ENCODE measurements at regions of chr14 and their contacts with region 1.

Region 1: GRCh38 chr14:54524410-54524809 is 14.7 kb downstream of the CGRRF1 start:
- DNase-seq: no peak
- ATAC-seq: no peak
- H3K4me3 ChIP-seq: no peak overlapping the region
- H3K4me3 Mint-ChIP-seq: no peak overlapping the region
- H3K27ac ChIP-seq: no peak overlapping the region
- H3K27ac Mint-ChIP-seq: no peak overlapping the region
- H3K4me1 ChIP-seq: no peaks in the 10 kb centered on the region
- H3K4me1 Mint-ChIP-seq: peaks cover 4% of the 10 kb centered on the region
- H3K27me3 ChIP-seq: no peaks in the 10 kb centered on the region
- H3K27me3 Mint-ChIP-seq: no peaks in the 10 kb centered on the region
- CTCF ChIP-seq: no peak

Region 2: GRCh38 chr14:54435500-54435981 is 88.9 kb before region 1 on chr14:
- CTCF ChIA-PET with region 1: no interaction called
- POLR2A ChIA-PET with region 1: no interaction called
- intact Hi-C with region 1: no loop called
- DNase-seq: peak in 1 of 9 experiments; percentile 25
- ATAC-seq: peak; percentile 72
- H3K4me3 ChIP-seq: no peak overlapping the region
- H3K4me3 Mint-ChIP-seq: peak overlapping the region; percentile 16
- H3K27ac ChIP-seq: no peak overlapping the region
- H3K27ac Mint-ChIP-seq: no peak overlapping the region
- H3K4me1 ChIP-seq: peaks cover 12% of the 10 kb centered on the region
- H3K4me1 Mint-ChIP-seq: peaks cover 66% of the 10 kb centered on the region
- H3K27me3 ChIP-seq: no peaks in the 10 kb centered on the region
- H3K27me3 Mint-ChIP-seq: no peaks in the 10 kb centered on the region
- CTCF ChIP-seq: no peak

Region 3: DNA sequence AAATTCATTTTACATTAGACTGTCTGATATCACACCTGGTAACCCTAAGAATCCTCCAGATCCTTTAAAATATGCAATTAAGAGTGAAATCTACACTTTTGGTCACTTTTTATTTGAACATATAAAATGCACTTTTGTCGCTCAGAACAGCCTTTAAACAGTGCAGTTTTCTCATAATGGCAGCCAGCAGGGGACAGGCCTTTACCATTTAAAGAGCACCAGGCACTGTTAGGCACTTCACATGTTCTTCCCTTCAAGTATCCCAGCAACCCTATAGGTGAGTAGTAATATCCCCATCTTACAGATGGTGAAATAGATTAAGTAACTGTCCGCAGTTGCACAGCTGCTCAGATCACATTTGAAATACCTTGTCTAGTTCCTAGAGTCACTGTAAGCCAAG is 31.2 kb after region 1 on chr14:
- CTCF ChIA-PET with region 1: no interaction called
- POLR2A ChIA-PET with region 1: no interaction called
- intact Hi-C with region 1: loop called in 1 of 2 experiments (anchors 1 kb)
- DNase-seq: no peak
- ATAC-seq: no peak
- H3K4me3 ChIP-seq: no peak overlapping the region
- H3K4me3 Mint-ChIP-seq: no peak overlapping the region
- H3K27ac ChIP-seq: no peak overlapping the region
- H3K27ac Mint-ChIP-seq: no peak overlapping the region
- H3K4me1 ChIP-seq: no peaks in the 10 kb centered on the region
- H3K4me1 Mint-ChIP-seq: no peaks in the 10 kb centered on the region
- H3K27me3 ChIP-seq: no peaks in the 10 kb centered on the region
- H3K27me3 Mint-ChIP-seq: peaks cover 14% of the 10 kb centered on the region
- CTCF ChIP-seq: no peak